ENCODE measurements at regions of chr1 and their contacts with region 1.

Region 1: DNA sequence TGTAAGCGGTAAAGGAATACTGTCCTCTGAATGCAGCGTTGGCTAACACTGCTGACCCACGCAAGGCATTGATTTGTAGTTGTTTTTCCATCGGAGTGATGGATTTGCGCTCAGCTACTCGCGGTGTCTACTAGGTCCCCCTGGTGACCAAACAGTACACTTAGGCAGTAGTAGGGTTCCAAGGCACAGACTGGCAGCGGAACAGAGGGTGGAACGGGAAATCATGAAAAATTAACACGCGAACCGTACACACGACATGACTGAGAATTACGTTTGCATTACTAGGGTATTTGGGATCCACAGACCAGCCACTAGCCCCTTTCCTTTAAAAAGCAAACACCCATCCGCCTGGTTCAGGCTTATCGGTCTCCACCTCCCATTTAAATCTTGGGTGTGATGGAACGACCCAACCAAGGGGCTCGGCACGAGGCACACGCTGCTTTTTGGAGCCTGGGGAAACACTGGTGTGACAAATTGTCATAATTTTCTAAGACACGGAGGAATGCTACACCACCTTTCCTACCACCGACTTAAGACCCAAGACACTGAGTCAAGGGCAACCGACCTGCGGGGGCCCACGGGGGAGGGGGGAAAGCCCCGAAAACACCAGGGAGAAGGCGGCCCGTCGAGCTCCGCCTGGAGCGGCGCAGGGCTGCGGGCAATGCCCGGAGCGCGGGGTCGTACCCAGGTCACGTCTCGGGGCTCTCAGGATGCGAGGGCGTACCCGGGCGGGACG is 699 bp downstream of the DIPK1A start:
- DNase-seq: peak; percentile 26 to 78 (median 72)
- H3K4me3 ChIP-seq: peak overlapping the region; percentile 93
- H3K4me3 Mint-ChIP-seq: peak overlapping the region in 6 of 7 donors; percentile 88 to 96 (median 91)
- H3K27ac ChIP-seq: peak overlapping the region; percentile 86
- H3K27ac Mint-ChIP-seq: peak overlapping the region; percentile 90 to 99 (median 96)
- H3K4me1 ChIP-seq: peaks cover 74% of the 10 kb centered on the region
- H3K4me1 Mint-ChIP-seq: peaks cover 43% of the 10 kb centered on the region in 3 donors
- H3K27me3 ChIP-seq: no peaks in the 10 kb centered on the region
- H3K27me3 Mint-ChIP-seq: peaks cover 0 to 3% of the 10 kb centered on the region in 2 donors

Region 2: DNA sequence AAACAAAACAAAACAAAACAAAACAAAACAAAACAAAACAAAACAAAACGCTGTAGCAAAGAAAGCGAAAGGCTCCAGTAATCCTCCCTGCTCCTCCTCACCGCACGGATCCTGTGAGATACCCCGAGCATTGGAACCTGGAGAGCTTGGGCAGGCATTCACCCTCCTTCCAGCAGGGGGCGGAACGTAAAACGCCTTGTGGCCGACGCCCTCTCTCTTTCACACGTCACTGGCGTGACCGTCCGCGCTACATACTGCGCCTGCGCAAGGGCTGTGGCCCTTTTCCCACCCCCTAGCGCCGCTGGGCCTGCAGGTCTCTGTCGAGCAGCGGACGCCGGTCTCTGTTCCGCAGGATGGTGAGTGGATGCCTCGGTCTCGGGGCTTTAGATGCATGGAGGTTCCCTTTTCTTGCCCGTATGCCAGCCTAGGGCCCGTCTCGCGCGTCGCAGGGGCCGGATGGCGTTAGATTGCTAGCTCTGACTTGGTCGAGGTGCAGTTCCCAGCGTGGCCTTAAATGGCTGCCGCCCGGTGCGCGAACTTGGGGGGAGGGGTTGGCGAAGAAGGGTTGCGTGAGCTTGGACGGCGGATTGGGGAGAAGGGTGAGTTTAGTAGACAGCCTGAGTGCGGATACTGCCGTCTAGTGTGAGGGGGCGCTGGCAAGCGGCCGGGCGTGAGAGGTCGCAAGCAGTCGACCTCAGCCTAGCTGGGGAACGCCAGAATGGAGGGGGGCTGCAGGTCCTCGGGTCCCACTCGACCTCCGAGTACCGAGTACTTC is 128.6 kb before region 1 on chr1 and contains the start of gene RPL5:
- CTCF ChIA-PET with region 1: interaction called, 27 read pairs
- POLR2A ChIA-PET with region 1: interaction called, 40 read pairs
- DNase-seq: peak; percentile 95 to 99 (median 98)
- H3K4me3 ChIP-seq: peak within 1 kb of the TSS; percentile 69
- H3K4me3 Mint-ChIP-seq: peak within 1 kb of the TSS; percentile 93 to 99 (median 98)
- H3K27ac ChIP-seq: peak within 1 kb of the TSS; percentile 90
- H3K27ac Mint-ChIP-seq: peak within 1 kb of the TSS; percentile 94 to 100 (median 98)
- H3K4me1 ChIP-seq: peaks cover 44% of the 10 kb centered on the region
- H3K4me1 Mint-ChIP-seq: peaks cover 45 to 56% (median 49%) of the 10 kb centered on the region in 3 donors
- H3K27me3 ChIP-seq: no peaks in the 10 kb centered on the region
- H3K27me3 Mint-ChIP-seq: peaks cover 0 to 2% of the 10 kb centered on the region in 2 donors
- total RNA-seq, gene RPL5: 1,428 to 1,468 TPM

Region 3: GRCh38 chr1:92858564-92859399 is 101.8 kb before region 1 on chr1:
- CTCF ChIA-PET with region 1: interaction called, 187 read pairs
- POLR2A ChIA-PET with region 1: interaction called, 5 read pairs
- DNase-seq: peak in 4 of 5 donors; percentile 39 to 78 (median 69)
- H3K4me3 ChIP-seq: peak overlapping the region; percentile 6
- H3K4me3 Mint-ChIP-seq: peak overlapping the region in 6 of 7 donors; percentile 3 to 66 (median 49)
- H3K27ac ChIP-seq: no peak overlapping the region
- H3K27ac Mint-ChIP-seq: peak overlapping the region in 6 of 8 donors; percentile 5 to 54 (median 11)
- H3K4me1 ChIP-seq: peaks cover 7% of the 10 kb centered on the region
- H3K4me1 Mint-ChIP-seq: peaks cover 11 to 23% (median 18%) of the 10 kb centered on the region in 3 donors
- H3K27me3 ChIP-seq: no peaks in the 10 kb centered on the region
- H3K27me3 Mint-ChIP-seq: peaks cover 0 to 2% of the 10 kb centered on the region in 2 donors

Region 4: DNA sequence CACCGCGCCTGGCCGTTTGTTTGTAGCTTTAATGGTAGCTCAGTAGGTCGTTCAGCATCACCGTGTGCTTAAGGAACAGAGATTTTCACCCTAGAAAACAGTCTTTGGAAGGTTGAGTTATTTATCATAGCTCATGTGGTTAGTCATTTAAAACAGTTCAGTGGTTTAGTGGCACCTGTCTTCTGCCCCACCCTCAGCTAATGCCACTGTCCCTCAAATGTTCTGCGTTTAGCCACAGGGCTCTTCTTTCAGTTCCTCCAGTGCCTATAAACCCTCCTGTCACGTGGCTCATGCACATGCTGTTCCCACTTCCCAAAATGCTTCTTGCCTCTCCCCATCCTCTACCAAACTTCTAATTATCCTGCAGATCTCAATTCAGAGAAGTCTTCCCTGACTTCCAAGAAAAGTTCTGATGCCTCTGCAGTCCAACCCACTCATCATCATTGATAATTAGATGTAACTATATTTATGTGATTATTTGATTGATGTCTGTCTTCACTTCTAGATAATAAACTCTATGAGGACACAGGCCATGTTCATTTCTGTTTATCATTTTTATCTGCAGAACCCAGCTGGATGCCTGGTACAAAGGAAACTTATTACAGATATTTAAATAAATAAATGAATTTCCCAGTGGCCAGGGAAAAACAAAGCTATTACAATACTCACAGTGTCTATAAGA is 15.1 kb after region 1 on chr1:
- CTCF ChIA-PET with region 1: interaction called, 37 read pairs
- POLR2A ChIA-PET with region 1: interaction called, 32 read pairs
- DNase-seq: no peak
- H3K4me3 ChIP-seq: no peak overlapping the region
- H3K4me3 Mint-ChIP-seq: peak overlapping the region in 3 of 7 donors; percentile 1 to 25 (median 22)
- H3K27ac ChIP-seq: no peak overlapping the region
- H3K27ac Mint-ChIP-seq: peak overlapping the region in 7 of 8 donors; percentile 8 to 89 (median 70)
- H3K4me1 ChIP-seq: peaks cover 33% of the 10 kb centered on the region
- H3K4me1 Mint-ChIP-seq: peaks cover 35 to 51% (median 50%) of the 10 kb centered on the region in 3 donors
- H3K27me3 ChIP-seq: no peaks in the 10 kb centered on the region
- H3K27me3 Mint-ChIP-seq: no peaks in the 10 kb centered on the region

Region 5: GRCh38 chr1:92994105-92994712 is 33.6 kb after region 1 on chr1:
- CTCF ChIA-PET with region 1: interaction called, 171 read pairs
- POLR2A ChIA-PET with region 1: interaction called, 32 read pairs
- DNase-seq: peak; percentile 47 to 81 (median 74)
- H3K4me3 ChIP-seq: no peak overlapping the region
- H3K4me3 Mint-ChIP-seq: no peak overlapping the region
- H3K27ac ChIP-seq: no peak overlapping the region
- H3K27ac Mint-ChIP-seq: peak overlapping the region in 7 of 8 donors; percentile 9 to 76 (median 31)
- H3K4me1 ChIP-seq: peaks cover 49% of the 10 kb centered on the region
- H3K4me1 Mint-ChIP-seq: peaks cover 35 to 49% (median 48%) of the 10 kb centered on the region in 3 donors
- H3K27me3 ChIP-seq: no peaks in the 10 kb centered on the region
- H3K27me3 Mint-ChIP-seq: peaks cover 0 to 1% of the 10 kb centered on the region in 2 donors

Region 6: DNA sequence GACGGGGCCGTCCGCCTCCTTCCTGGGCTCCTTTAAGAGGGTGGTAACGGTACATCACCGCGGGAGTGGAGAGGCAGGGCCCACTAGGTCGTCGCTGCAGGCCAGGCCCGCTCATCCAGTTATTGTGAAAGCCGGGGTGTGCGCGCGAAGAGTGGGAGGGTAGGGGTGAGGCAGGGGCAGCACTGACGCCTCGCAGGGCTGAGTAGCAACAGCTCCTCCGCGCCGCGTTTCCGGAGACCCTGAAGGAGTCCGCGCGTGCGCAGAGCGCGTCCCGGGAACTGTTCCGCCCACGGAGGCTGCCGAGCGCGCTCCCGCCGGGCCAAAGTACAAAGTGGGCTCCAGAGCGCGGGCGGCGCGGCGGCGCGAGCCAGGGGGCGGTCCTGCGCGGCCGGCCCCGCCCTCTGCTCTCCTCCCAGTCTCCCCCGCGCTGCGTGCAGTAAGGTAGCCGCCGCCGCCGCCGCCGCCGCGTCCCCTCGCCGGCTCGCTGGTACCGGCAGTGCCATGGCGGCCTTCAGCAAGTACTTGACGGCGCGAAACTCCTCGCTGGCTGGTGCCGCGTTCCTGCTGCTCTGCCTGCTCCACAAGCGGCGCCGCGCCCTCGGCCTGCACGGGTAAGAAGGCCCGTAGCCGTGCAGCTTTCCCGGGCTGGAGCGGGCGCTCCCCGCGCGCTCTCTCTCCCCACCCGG is 1457.6 kb after region 1 on chr1 and contains the start of gene ABCD3:
- CTCF ChIA-PET with region 1: no interaction called
- POLR2A ChIA-PET with region 1: interaction called, 13 read pairs
- DNase-seq: peak; percentile 96 to 99 (median 98)
- H3K4me3 ChIP-seq: peak within 1 kb of the TSS; percentile 65
- H3K4me3 Mint-ChIP-seq: no peak within 1 kb of the TSS
- H3K27ac ChIP-seq: peak within 1 kb of the TSS; percentile 62
- H3K27ac Mint-ChIP-seq: peak within 1 kb of the TSS in 7 of 8 donors; percentile 47 to 89 (median 81)
- H3K4me1 ChIP-seq: peaks cover 31% of the 10 kb centered on the region
- H3K4me1 Mint-ChIP-seq: peaks cover 29 to 44% (median 37%) of the 10 kb centered on the region in 3 donors
- H3K27me3 ChIP-seq: no peaks in the 10 kb centered on the region
- H3K27me3 Mint-ChIP-seq: peaks cover 1 to 6% of the 10 kb centered on the region in 2 donors
- total RNA-seq, gene ABCD3: 36.7 to 38.8 TPM

Measured in CD8-positive, alpha-beta memory T cell (primary cell).